CD4-positive, alpha-beta memory T cell (primary cell): ENCODE measurements at regions of chr12 and their contacts with region 1.

Region 1: GRCh38 chr12:14920475-14921126 is 17.7 kb downstream of the ERP27 start:
- DNase-seq: no peak
- H3K4me3 ChIP-seq: no peak overlapping the region
- H3K4me3 Mint-ChIP-seq: peak overlapping the region in 1 of 8 donors; percentile 27
- H3K27ac ChIP-seq: no peak overlapping the region
- H3K27ac Mint-ChIP-seq: peak overlapping the region; percentile 19 to 80 (median 78)
- H3K4me1 ChIP-seq: peaks cover 15% of the 10 kb centered on the region
- H3K4me1 Mint-ChIP-seq: peaks cover 11 to 34% (median 16%) of the 10 kb centered on the region in 4 donors
- H3K27me3 ChIP-seq: no peaks in the 10 kb centered on the region
- H3K27me3 Mint-ChIP-seq: no peaks in the 10 kb centered on the region

Region 2: GRCh38 chr12:14884458-14884878 is 36.1 kb before region 1 on chr12:
- CTCF ChIA-PET with region 1: no interaction called
- POLR2A ChIA-PET with region 1: no interaction called
- intact Hi-C with region 1: loop called (anchors 5 kb)
- DNase-seq: peak; percentile 83 to 89 (median 86)
- H3K4me3 ChIP-seq: no peak overlapping the region
- H3K4me3 Mint-ChIP-seq: peak overlapping the region; percentile 8 to 85 (median 64)
- H3K27ac ChIP-seq: no peak overlapping the region
- H3K27ac Mint-ChIP-seq: peak overlapping the region; percentile 26 to 91 (median 77)
- H3K4me1 ChIP-seq: peaks cover 20% of the 10 kb centered on the region
- H3K4me1 Mint-ChIP-seq: peaks cover 14 to 35% (median 24%) of the 10 kb centered on the region in 4 donors
- H3K27me3 ChIP-seq: no peaks in the 10 kb centered on the region
- H3K27me3 Mint-ChIP-seq: peaks cover 2 to 6% of the 10 kb centered on the region in 2 donors

Region 3: GRCh38 chr12:14905269-14906004 is 15.2 kb before region 1 on chr12:
- CTCF ChIA-PET with region 1: no interaction called
- POLR2A ChIA-PET with region 1: no interaction called
- intact Hi-C with region 1: no loop called
- DNase-seq: no peak
- H3K4me3 ChIP-seq: no peak overlapping the region
- H3K4me3 Mint-ChIP-seq: no peak overlapping the region
- H3K27ac ChIP-seq: no peak overlapping the region
- H3K27ac Mint-ChIP-seq: peak overlapping the region in 2 of 7 donors; percentile 48 to 59
- H3K4me1 ChIP-seq: peaks cover 6% of the 10 kb centered on the region
- H3K4me1 Mint-ChIP-seq: peaks cover 12 to 19% (median 15%) of the 10 kb centered on the region in 4 donors
- H3K27me3 ChIP-seq: no peaks in the 10 kb centered on the region
- H3K27me3 Mint-ChIP-seq: no peaks in the 10 kb centered on the region

Region 4: GRCh38 chr12:15033641-15034040 is 113.0 kb after region 1 on chr12:
- CTCF ChIA-PET with region 1: no interaction called
- POLR2A ChIA-PET with region 1: no interaction called
- intact Hi-C with region 1: no loop called
- DNase-seq: no peak
- H3K4me3 ChIP-seq: no peak overlapping the region
- H3K4me3 Mint-ChIP-seq: no peak overlapping the region
- H3K27ac ChIP-seq: no peak overlapping the region
- H3K27ac Mint-ChIP-seq: no peak overlapping the region
- H3K4me1 ChIP-seq: no peaks in the 10 kb centered on the region
- H3K4me1 Mint-ChIP-seq: no peaks in the 10 kb centered on the region
- H3K27me3 ChIP-seq: peaks cover 4% of the 10 kb centered on the region
- H3K27me3 Mint-ChIP-seq: peaks cover 19 to 23% of the 10 kb centered on the region in 2 donors